ENCODE measurements at regions of chr1 and their contacts with region 1.

Region 1: DNA sequence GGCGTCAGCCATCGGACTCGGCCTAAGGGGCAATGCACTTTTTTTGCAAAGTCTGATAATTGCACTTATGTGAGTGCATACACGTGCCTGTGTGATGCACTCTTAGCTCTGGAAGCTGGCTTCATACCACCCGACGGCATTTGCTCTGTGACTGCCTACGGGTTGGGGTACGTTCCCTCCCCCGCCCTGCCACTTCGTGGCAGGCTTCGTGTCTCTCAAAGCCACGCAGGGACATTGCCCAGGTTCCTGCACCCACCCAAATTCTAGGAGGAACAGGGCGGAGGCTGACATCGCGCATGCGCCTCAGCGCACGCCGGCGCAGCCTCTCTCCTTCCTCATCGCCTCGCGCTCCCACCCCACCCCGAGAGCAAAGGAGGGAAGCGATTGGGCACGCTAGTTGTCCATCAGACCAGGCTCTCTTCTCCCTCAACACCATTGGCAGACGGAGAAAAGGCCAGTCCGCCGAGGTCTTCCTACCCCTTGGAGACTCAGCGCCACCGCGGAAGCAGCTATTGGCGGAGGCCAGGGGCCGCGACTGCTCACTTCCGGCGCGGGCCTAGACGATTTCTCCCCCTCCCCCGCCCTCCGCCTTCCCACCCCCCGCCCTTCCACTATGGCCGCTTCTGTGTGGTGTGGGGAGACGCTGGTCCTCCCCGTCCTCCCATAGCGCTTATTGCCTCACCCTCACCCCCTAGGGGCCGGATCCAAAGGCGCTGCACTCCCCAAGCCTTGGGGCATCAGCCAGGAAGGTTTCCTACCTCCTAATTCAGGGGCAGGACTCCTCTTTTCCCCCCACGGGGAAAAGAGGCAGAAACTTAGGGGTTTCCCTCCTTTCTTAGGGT is at the start of gene INTS3:
- DNase-seq: peak; percentile 100
- H3K4me3 ChIP-seq: peak within 1 kb of the TSS; percentile 96
- H3K27ac ChIP-seq: peak within 1 kb of the TSS; percentile 78
- H3K4me1 ChIP-seq: 0 out of 2 replicates have a peak, but pooled peaks cover 9% of the 10 kb centered on the region
- H3K27me3 ChIP-seq: no peaks in the 10 kb centered on the region
- total RNA-seq, gene INTS3: 40.2 and 41.5 TPM in 2 replicates

Region 2: DNA sequence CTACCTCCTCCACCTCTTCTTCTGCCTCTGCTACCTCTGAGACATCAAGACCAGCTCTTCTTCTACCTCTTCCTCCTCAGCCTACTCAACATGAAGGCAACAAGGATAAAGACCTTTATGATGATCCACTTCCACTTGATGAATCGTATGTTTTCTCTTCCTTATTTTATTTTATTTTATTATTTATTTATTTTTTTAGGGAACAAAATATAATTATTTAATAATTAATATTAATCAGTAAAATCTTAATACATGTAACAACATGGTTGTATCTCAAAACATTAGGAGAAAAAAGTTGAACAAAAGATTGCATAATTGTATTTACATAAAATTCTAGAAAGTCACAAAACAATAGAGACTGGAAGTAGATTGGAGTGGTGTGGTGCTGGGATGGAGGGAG is 1490.6 kb before region 1 on chr1:
- in situ Hi-C with region 1: no loop called
- DNase-seq: no peak
- H3K4me3 ChIP-seq: no peak overlapping the region
- H3K27ac ChIP-seq: no peak overlapping the region
- H3K4me1 ChIP-seq: no peaks in the 10 kb centered on the region
- H3K27me3 ChIP-seq: no peaks in the 10 kb centered on the region

Region 3: DNA sequence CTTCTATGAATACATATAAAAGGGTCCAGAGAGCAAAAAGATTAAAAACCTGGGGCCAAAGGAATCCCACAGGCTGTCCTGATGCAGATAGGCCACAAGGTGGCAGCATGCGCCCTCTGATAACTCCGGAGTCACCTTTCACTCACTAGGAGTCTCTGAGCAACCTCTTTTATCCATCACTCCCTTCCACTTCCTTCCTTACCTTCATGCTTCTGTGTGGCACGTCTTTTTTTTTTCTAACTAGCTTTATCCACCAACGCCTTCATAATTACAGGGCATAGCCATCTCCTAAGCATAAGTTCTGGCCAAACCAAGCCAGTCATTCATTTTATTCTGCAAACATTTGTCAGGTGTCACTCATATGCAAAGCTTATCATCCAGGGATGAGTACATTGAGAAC is 375.2 kb before region 1 on chr1:
- in situ Hi-C with region 1: loop called (anchors 25 kb)
- DNase-seq: peak; percentile 81
- H3K4me3 ChIP-seq: no peak overlapping the region
- H3K27ac ChIP-seq: no peak overlapping the region
- H3K4me1 ChIP-seq: no peaks in the 10 kb centered on the region
- H3K27me3 ChIP-seq: peaks cover 32% of the 10 kb centered on the region